ENCODE measurements at regions of chr11 and their contacts with region 1.

Region 1: DNA sequence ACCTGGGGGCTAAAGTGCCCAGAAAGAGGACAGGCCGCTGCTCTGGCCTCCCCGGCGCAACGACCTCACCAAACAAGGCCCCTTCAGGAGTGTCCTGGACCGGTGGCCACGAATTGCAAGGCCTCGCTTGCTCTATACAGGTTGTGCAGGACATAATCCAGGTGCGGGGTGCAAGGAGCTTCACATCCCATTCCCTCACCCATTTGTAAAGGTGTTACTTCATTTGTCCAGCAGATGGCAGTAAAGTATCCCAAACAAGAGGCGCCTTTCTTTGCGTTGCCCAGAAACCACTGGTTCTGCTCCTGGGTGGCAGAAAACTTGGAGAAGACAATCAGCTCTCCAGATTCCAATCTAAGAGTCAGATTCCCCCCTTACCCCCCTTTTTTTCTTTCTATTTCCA is 35.9 kb upstream of the PRDM11 start:
- DNase-seq: peak; percentile 45 to 71 (median 64)
- H3K4me3 ChIP-seq: no peak overlapping the region
- H3K4me3 Mint-ChIP-seq: no peak overlapping the region
- H3K27ac ChIP-seq: no peak overlapping the region
- H3K27ac Mint-ChIP-seq: no peak overlapping the region
- H3K4me1 ChIP-seq: no peaks in the 10 kb centered on the region
- H3K4me1 Mint-ChIP-seq: peaks cover 0 to 2% (median 0%) of the 10 kb centered on the region in 4 donors
- H3K27me3 ChIP-seq: no peaks in the 10 kb centered on the region
- H3K27me3 Mint-ChIP-seq: peaks cover 17 to 30% of the 10 kb centered on the region in 2 donors

Region 2: GRCh38 chr11:44737245-44738085 is 373.1 kb before region 1 on chr11:
- CTCF ChIA-PET with region 1: no interaction called
- POLR2A ChIA-PET with region 1: no interaction called
- intact Hi-C with region 1: no loop called
- DNase-seq: no peak
- H3K4me3 ChIP-seq: no peak overlapping the region
- H3K4me3 Mint-ChIP-seq: peak overlapping the region in 1 of 8 donors; percentile 6
- H3K27ac ChIP-seq: no peak overlapping the region
- H3K27ac Mint-ChIP-seq: peak overlapping the region in 6 of 7 donors; percentile 5 to 82 (median 68)
- H3K4me1 ChIP-seq: peaks cover 20% of the 10 kb centered on the region
- H3K4me1 Mint-ChIP-seq: peaks cover 31 to 87% (median 49%) of the 10 kb centered on the region in 4 donors
- H3K27me3 ChIP-seq: no peaks in the 10 kb centered on the region
- H3K27me3 Mint-ChIP-seq: no peaks in the 10 kb centered on the region

Region 3: DNA sequence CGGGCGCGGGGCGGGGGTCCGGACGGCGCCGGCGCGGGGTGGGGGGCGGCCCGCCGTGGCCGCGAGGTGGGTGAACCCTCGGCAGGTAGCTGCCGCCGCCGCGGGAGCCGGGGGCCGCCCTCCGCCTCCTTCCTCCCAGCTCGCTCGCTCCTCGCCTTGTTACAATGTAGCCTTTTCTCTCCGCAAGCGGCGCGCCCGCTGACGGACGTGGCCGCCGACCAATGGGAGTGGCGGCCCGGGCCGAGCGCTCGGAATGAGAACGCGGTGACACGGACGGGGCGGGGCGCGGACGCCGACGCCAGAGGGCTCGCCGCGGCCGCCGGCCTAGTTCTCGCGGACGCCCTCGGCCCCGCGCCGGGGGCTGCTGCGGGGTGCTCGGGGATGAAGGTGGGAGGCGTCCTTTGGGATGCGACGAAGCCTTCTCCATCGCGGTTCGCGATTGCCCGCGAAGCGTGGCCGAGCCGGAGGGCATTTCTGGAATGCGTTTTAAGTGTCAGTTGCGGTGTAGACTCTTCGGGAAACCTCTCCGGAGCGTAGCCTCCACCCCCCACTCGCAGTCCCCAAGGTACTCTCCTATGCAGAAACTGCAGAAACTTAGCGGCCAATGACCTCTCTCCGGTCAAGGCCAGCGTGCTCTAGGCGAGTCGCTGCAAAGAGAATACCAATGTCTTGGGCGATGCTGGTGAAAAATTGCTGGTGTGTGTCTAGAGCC is 36.6 kb after region 1 on chr11:
- CTCF ChIA-PET with region 1: interaction called, 14 read pairs
- POLR2A ChIA-PET with region 1: no interaction called
- intact Hi-C with region 1: loop called (anchors 2 kb)
- DNase-seq: peak; percentile 92 to 93 (median 92)
- H3K4me3 ChIP-seq: peak overlapping the region; percentile 69 to 72
- H3K4me3 Mint-ChIP-seq: peak overlapping the region; percentile 90 to 94 (median 92)
- H3K27ac ChIP-seq: peak overlapping the region; percentile 68
- H3K27ac Mint-ChIP-seq: peak overlapping the region; percentile 67 to 95 (median 93)
- H3K4me1 ChIP-seq: peaks cover 21% of the 10 kb centered on the region
- H3K4me1 Mint-ChIP-seq: peaks cover 26 to 47% (median 36%) of the 10 kb centered on the region in 4 donors
- H3K27me3 ChIP-seq: peaks cover 9% of the 10 kb centered on the region
- H3K27me3 Mint-ChIP-seq: no peaks in the 10 kb centered on the region

Region 4: DNA sequence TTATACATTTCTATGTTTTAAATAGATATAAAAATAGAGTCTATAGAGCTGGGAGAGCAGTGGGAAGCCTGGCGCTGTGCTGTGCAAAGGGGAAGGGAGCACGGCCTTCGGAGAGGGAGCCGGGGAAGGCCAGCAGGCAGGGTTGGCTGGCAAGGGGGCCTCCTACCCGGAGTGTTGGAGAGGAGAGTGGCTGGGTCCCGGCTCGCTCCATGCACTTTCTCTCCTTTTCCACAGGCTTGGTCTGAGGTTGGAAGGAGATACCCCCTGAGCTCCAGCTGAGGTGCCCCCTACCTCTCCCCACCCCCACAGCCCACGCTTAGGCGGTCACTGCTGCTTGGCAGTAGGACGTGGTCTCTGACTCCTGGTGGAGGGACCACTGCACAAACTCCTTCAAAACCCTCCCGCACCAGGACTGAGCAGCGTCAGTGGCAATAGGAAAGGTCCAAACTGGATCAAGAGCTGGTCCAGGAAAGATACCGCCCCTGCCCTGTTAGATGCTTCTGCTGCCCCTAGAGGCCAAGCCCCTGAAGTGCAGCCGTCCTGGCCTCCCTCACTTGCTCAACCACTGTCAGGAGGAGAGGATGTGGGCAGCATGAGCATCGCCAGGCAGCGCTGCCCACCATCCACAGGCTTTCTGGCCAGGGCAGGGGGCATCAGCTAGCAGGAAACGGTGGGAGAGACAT is 122.7 kb after region 1 on chr11:
- CTCF ChIA-PET with region 1: interaction called, 8 read pairs
- POLR2A ChIA-PET with region 1: no interaction called
- intact Hi-C with region 1: loop called (anchors 1 kb)
- DNase-seq: peak in 4 of 5 donors; percentile 33 to 52 (median 42)
- H3K4me3 ChIP-seq: no peak overlapping the region
- H3K4me3 Mint-ChIP-seq: no peak overlapping the region
- H3K27ac ChIP-seq: no peak overlapping the region
- H3K27ac Mint-ChIP-seq: no peak overlapping the region
- H3K4me1 ChIP-seq: no peaks in the 10 kb centered on the region
- H3K4me1 Mint-ChIP-seq: peaks cover 0 to 1% (median 0%) of the 10 kb centered on the region in 4 donors
- H3K27me3 ChIP-seq: peaks cover 9% of the 10 kb centered on the region
- H3K27me3 Mint-ChIP-seq: peaks cover 16 to 18% of the 10 kb centered on the region in 2 donors

Region 5: DNA sequence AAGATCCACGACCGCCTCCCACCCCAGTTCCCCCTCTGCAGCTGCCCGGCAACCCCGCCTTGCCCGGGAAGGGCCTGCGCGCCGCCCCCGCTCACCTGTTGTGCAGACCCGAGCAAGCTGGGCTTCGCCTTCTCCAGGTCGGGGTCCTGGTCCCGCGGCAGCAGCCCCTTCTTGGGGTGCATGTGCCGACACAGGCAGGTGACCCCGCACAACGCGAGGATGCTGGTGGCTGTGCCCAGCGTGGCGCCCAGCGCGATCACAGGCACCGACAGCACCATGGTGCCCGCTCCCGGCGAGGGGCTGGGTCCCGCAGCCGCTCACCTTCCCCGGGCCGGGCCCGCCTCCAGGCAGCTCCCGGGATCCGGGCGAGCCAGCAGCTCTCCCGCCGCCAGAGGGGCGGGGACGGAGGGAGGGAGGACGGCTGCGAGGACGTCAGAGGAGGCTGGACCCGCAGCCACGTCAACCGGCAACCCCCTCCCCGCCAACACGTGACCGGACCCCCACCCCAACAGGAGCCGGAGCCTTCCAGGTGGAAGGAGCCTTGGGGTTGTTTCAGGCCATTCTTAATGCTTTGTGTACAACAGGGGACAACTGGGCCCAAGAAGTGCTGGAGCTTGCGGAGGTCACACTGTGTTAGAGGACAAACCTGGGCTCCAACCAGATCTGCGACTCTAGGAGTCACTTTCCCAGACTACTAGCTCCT is 175.5 kb after region 1 on chr11 and contains the start of gene SYT13:
- CTCF ChIA-PET with region 1: interaction called, 47 read pairs
- POLR2A ChIA-PET with region 1: no interaction called
- intact Hi-C with region 1: no loop called
- DNase-seq: no peak
- H3K4me3 ChIP-seq: no peak within 1 kb of the TSS
- H3K4me3 Mint-ChIP-seq: peak within 1 kb of the TSS in 1 of 8 donors; percentile 24
- H3K27ac ChIP-seq: no peak within 1 kb of the TSS
- H3K27ac Mint-ChIP-seq: peak within 1 kb of the TSS in 1 of 7 donors; percentile 68
- H3K4me1 ChIP-seq: no peaks in the 10 kb centered on the region
- H3K4me1 Mint-ChIP-seq: no peaks in the 10 kb centered on the region
- H3K27me3 ChIP-seq: peaks cover 38% of the 10 kb centered on the region
- H3K27me3 Mint-ChIP-seq: peaks cover 43 to 67% of the 10 kb centered on the region in 2 donors
- total RNA-seq, gene SYT13: not detected

Region 6: DNA sequence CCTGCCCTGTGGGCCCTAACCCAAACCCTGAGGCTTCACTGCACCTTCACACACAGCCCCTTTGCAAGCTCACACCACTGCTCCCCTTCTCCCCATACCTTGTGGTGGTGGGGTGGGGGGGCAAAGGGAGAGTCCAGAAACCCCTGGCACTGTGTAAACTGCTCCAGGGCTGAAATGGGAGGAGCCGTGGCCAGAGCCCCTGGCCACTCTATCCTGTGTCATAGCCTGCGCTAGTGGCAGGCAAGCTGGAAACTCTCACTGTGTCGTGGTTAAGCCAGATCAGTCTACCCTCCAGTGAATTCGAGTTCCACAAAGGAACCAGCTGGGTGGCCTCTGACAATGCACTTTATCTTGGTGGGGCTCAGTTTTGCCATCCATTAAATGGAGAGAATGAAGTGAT is 183.9 kb after region 1 on chr11:
- CTCF ChIA-PET with region 1: interaction called, 47 read pairs
- POLR2A ChIA-PET with region 1: no interaction called
- intact Hi-C with region 1: no loop called
- DNase-seq: no peak
- H3K4me3 ChIP-seq: no peak overlapping the region
- H3K4me3 Mint-ChIP-seq: no peak overlapping the region
- H3K27ac ChIP-seq: no peak overlapping the region
- H3K27ac Mint-ChIP-seq: no peak overlapping the region
- H3K4me1 ChIP-seq: no peaks in the 10 kb centered on the region
- H3K4me1 Mint-ChIP-seq: no peaks in the 10 kb centered on the region
- H3K27me3 ChIP-seq: peaks cover 6% of the 10 kb centered on the region
- H3K27me3 Mint-ChIP-seq: peaks cover 16 to 24% of the 10 kb centered on the region in 2 donors

Region 7: DNA sequence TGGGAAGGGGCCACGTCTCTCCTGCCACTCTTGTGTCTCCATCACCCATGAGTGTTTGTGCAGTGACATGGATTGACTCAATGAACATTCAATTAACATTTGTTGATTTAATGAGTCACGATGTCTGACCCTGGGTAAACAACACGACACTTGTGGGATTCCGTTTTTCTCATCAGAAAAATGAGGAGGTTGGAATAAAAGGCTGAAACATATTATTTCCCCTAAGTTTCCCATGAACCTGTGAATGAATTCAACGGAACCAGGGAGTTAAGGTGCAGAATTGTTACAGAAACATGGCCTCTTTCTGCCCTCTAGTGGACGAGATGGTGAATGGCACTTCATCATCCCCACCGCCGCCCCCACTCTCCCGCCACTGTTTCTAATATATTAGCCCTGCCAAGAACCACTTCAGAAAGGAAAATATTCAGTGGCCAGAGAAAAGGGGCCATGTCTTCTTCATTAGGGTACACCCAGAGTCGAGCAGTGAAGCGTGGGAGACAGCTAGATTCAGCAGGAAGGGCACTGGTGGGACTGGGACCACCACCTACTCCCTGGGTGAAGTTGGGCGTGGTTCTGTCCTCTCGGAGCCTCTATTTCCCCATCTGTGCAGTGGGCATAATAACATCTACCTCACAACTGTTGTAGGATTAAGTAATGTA is 221.8 kb after region 1 on chr11:
- CTCF ChIA-PET with region 1: interaction called, 259 read pairs
- POLR2A ChIA-PET with region 1: interaction called, 4 read pairs
- intact Hi-C with region 1: loop called (anchors 1 kb)
- DNase-seq: peak in 4 of 5 donors; percentile 32 to 42 (median 38)
- H3K4me3 ChIP-seq: no peak overlapping the region
- H3K4me3 Mint-ChIP-seq: no peak overlapping the region
- H3K27ac ChIP-seq: no peak overlapping the region
- H3K27ac Mint-ChIP-seq: peak overlapping the region in 1 of 7 donors; percentile 75
- H3K4me1 ChIP-seq: no peaks in the 10 kb centered on the region
- H3K4me1 Mint-ChIP-seq: peaks cover 0 to 1% (median 0%) of the 10 kb centered on the region in 4 donors
- H3K27me3 ChIP-seq: peaks cover 10% of the 10 kb centered on the region
- H3K27me3 Mint-ChIP-seq: peaks cover 11 to 14% of the 10 kb centered on the region in 2 donors